CD8-positive, alpha-beta T cell (primary cell): ENCODE measurements at regions of chr12 and their contacts with region 1.

Region 1: GRCh38 chr12:28456934-28457710 is 266.9 kb downstream of the CCDC91 start:
- DNase-seq: no peak
- ATAC-seq: no peak
- H3K4me3 ChIP-seq: no peak overlapping the region
- H3K4me3 Mint-ChIP-seq: no peak overlapping the region
- H3K27ac ChIP-seq: no peak overlapping the region
- H3K27ac Mint-ChIP-seq: no peak overlapping the region
- H3K4me1 ChIP-seq: no peaks in the 10 kb centered on the region
- H3K4me1 Mint-ChIP-seq: no peaks in the 10 kb centered on the region
- H3K27me3 ChIP-seq: no peaks in the 10 kb centered on the region
- H3K27me3 Mint-ChIP-seq: no peaks in the 10 kb centered on the region
- CTCF ChIP-seq: no peak

Region 2: GRCh38 chr12:28424965-28425364 is 32.2 kb before region 1 on chr12:
- CTCF ChIA-PET with region 1: no interaction called
- POLR2A ChIA-PET with region 1: no interaction called
- intact Hi-C with region 1: loop called in 1 of 2 experiments (anchors 1 kb)
- DNase-seq: no peak
- ATAC-seq: no peak
- H3K4me3 ChIP-seq: no peak overlapping the region
- H3K4me3 Mint-ChIP-seq: no peak overlapping the region
- H3K27ac ChIP-seq: no peak overlapping the region
- H3K27ac Mint-ChIP-seq: no peak overlapping the region
- H3K4me1 ChIP-seq: no peaks in the 10 kb centered on the region
- H3K4me1 Mint-ChIP-seq: peaks cover 4% of the 10 kb centered on the region
- H3K27me3 ChIP-seq: no peaks in the 10 kb centered on the region
- H3K27me3 Mint-ChIP-seq: no peaks in the 10 kb centered on the region
- CTCF ChIP-seq: no peak